CD4-positive, alpha-beta memory T cell (primary cell): ENCODE measurements at regions of chr14 and their contacts with region 1.

Region 1: DNA sequence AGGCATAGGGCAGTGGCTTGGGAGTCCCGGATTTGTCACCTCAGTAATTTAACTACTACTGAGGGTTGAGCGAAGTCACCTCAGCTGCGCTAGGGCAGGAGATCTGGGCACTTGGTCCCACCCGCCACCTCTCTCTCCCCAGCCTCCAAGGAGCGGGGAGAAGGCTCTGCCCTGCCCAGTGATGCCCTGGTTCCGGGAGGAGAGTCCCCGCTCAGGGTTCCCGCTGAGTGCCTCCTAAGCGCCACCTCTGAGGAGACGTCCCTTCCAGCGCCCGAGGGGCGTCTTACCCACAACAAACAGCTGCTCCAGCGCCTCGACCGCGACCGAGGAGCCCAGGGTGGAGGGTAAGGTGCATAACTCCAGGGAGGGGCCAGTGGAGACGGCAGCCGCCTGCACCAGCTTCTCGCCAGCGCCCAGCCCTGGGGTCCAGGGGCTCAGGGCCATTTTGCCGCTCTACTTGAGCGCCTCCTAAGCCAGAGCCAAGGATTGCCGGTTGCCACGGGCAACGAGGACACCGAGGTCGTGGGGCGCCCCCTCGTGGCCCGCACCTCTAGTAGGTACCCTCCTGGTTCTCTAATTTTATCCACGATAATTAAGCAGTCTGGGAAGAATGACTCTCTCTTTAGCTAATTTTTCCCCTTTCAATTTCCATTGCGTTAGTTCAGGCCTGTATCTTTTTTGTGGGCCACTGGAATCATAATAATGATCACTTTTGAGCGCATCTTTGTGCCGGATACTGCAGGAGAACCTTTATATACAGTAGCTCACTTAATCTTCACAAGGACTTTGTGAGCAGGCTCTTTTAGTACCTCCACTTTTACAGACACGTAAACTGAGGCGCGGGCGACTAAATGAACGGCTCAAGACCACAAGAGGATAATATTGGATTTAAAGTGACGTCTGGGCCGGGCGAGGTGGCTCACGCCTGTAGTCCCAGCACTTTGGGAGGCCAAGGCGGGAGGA is at the start of gene CCDC175:
- DNase-seq: peak; percentile 76 to 84 (median 80)
- H3K4me3 ChIP-seq: peak within 1 kb of the TSS; percentile 63 to 69
- H3K4me3 Mint-ChIP-seq: peak within 1 kb of the TSS; percentile 76 to 88 (median 82)
- H3K27ac ChIP-seq: no peak within 1 kb of the TSS
- H3K27ac Mint-ChIP-seq: peak within 1 kb of the TSS in 6 of 7 donors; percentile 0 to 91 (median 42)
- H3K4me1 ChIP-seq: peaks cover 10% of the 10 kb centered on the region
- H3K4me1 Mint-ChIP-seq: peaks cover 5 to 11% (median 6%) of the 10 kb centered on the region in 4 donors
- H3K27me3 ChIP-seq: no peaks in the 10 kb centered on the region
- H3K27me3 Mint-ChIP-seq: peaks cover 3 to 4% of the 10 kb centered on the region in 2 donors
- total RNA-seq, gene CCDC175: not detected

Region 2: GRCh38 chr14:59126710-59127432 is 449.7 kb before region 1 on chr14:
- CTCF ChIA-PET with region 1: interaction called, 32 read pairs
- POLR2A ChIA-PET with region 1: no interaction called
- intact Hi-C with region 1: loop called (anchors 1 kb)
- DNase-seq: peak in 4 of 5 donors; percentile 55 to 62 (median 61)
- H3K4me3 ChIP-seq: no peak overlapping the region
- H3K4me3 Mint-ChIP-seq: no peak overlapping the region
- H3K27ac ChIP-seq: no peak overlapping the region
- H3K27ac Mint-ChIP-seq: no peak overlapping the region
- H3K4me1 ChIP-seq: no peaks in the 10 kb centered on the region
- H3K4me1 Mint-ChIP-seq: peaks cover 0 to 3% (median 0%) of the 10 kb centered on the region in 4 donors
- H3K27me3 ChIP-seq: no peaks in the 10 kb centered on the region
- H3K27me3 Mint-ChIP-seq: peaks cover 13 to 19% of the 10 kb centered on the region in 2 donors

Region 3: DNA sequence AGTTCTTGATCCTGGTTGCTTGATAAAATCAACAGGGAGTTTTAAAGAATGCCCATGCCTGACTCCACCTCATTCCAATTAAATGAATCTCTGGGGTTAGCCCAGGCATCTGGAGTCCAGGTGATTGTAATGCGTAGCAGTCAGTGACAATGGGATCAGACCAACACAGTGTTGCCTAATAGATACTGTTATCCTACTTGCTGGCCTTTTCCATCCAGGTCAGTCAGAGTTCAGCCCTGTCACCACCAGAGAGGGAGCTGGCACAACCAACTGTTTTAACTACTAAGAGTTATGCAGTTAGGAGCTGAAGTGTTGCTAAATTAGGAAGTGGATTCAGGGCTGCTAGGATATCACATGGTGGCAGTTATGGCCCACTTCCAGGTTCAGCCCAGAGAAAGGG is 218.5 kb before region 1 on chr14:
- CTCF ChIA-PET with region 1: no interaction called
- POLR2A ChIA-PET with region 1: no interaction called
- intact Hi-C with region 1: no loop called
- DNase-seq: no peak
- H3K4me3 ChIP-seq: no peak overlapping the region
- H3K4me3 Mint-ChIP-seq: no peak overlapping the region
- H3K27ac ChIP-seq: no peak overlapping the region
- H3K27ac Mint-ChIP-seq: no peak overlapping the region
- H3K4me1 ChIP-seq: no peaks in the 10 kb centered on the region
- H3K4me1 Mint-ChIP-seq: peaks cover 0 to 2% (median 0%) of the 10 kb centered on the region in 4 donors
- H3K27me3 ChIP-seq: no peaks in the 10 kb centered on the region
- H3K27me3 Mint-ChIP-seq: no peaks in the 10 kb centered on the region

Region 4: GRCh38 chr14:59428581-59429012 is 148.0 kb before region 1 on chr14:
- CTCF ChIA-PET with region 1: no interaction called
- POLR2A ChIA-PET with region 1: no interaction called
- intact Hi-C with region 1: no loop called
- DNase-seq: no peak
- H3K4me3 ChIP-seq: no peak overlapping the region
- H3K4me3 Mint-ChIP-seq: no peak overlapping the region
- H3K27ac ChIP-seq: no peak overlapping the region
- H3K27ac Mint-ChIP-seq: no peak overlapping the region
- H3K4me1 ChIP-seq: no peaks in the 10 kb centered on the region
- H3K4me1 Mint-ChIP-seq: no peaks in the 10 kb centered on the region
- H3K27me3 ChIP-seq: no peaks in the 10 kb centered on the region
- H3K27me3 Mint-ChIP-seq: peaks cover 3 to 9% of the 10 kb centered on the region in 2 donors

Region 5: GRCh38 chr14:59483900-59484638 is 92.5 kb before region 1 on chr14 and contains the starts of genes JKAMP and L3HYPDH:
- CTCF ChIA-PET with region 1: interaction called, 8 read pairs
- POLR2A ChIA-PET with region 1: interaction called, 4 read pairs
- intact Hi-C with region 1: loop called (anchors 1 kb)
- DNase-seq: peak; percentile 95 to 97 (median 95)
- H3K4me3 ChIP-seq: peak within 1 kb of the TSS; percentile 85 to 87
- H3K4me3 Mint-ChIP-seq: peak within 1 kb of the TSS; percentile 92 to 98 (median 96)
- H3K27ac ChIP-seq: peak within 1 kb of the TSS; percentile 82
- H3K27ac Mint-ChIP-seq: peak within 1 kb of the TSS; percentile 90 to 99 (median 96)
- H3K4me1 ChIP-seq: peaks cover 63% of the 10 kb centered on the region
- H3K4me1 Mint-ChIP-seq: peaks cover 52 to 72% (median 58%) of the 10 kb centered on the region in 4 donors
- H3K27me3 ChIP-seq: no peaks in the 10 kb centered on the region
- H3K27me3 Mint-ChIP-seq: no peaks in the 10 kb centered on the region
- total RNA-seq, gene JKAMP: 29.9 to 31.9 TPM
- total RNA-seq, gene L3HYPDH: 52.2 to 52.4 TPM

Region 6: GRCh38 chr14:59591641-59592370 is 15.2 kb after region 1 on chr14:
- CTCF ChIA-PET with region 1: interaction called, 16 read pairs
- POLR2A ChIA-PET with region 1: no interaction called
- intact Hi-C with region 1: no loop called
- DNase-seq: no peak
- H3K4me3 ChIP-seq: no peak overlapping the region
- H3K4me3 Mint-ChIP-seq: no peak overlapping the region
- H3K27ac ChIP-seq: no peak overlapping the region
- H3K27ac Mint-ChIP-seq: no peak overlapping the region
- H3K4me1 ChIP-seq: peaks cover 5% of the 10 kb centered on the region
- H3K4me1 Mint-ChIP-seq: peaks cover 0 to 6% (median 3%) of the 10 kb centered on the region in 4 donors
- H3K27me3 ChIP-seq: no peaks in the 10 kb centered on the region
- H3K27me3 Mint-ChIP-seq: peaks cover 0 to 2% of the 10 kb centered on the region in 2 donors